Activated CD4-positive, alpha-beta T cell treated with anti-CD3 and anti-CD28 coated beads for 36 hours (primary cell): ENCODE measurements at regions of chr4 and their contacts with region 1.

Region 1: GRCh38 chr4:151117371-151117962 is 18.0 kb downstream of the RPS3A start:
- DNase-seq: peak; percentile 74
- ATAC-seq: peak; percentile 72
- H3K4me3 Mint-ChIP-seq: no peak overlapping the region
- H3K27ac Mint-ChIP-seq: no peak overlapping the region
- H3K4me1 Mint-ChIP-seq: peaks cover 8% of the 10 kb centered on the region
- H3K27me3 Mint-ChIP-seq: no peaks in the 10 kb centered on the region

Region 2: DNA sequence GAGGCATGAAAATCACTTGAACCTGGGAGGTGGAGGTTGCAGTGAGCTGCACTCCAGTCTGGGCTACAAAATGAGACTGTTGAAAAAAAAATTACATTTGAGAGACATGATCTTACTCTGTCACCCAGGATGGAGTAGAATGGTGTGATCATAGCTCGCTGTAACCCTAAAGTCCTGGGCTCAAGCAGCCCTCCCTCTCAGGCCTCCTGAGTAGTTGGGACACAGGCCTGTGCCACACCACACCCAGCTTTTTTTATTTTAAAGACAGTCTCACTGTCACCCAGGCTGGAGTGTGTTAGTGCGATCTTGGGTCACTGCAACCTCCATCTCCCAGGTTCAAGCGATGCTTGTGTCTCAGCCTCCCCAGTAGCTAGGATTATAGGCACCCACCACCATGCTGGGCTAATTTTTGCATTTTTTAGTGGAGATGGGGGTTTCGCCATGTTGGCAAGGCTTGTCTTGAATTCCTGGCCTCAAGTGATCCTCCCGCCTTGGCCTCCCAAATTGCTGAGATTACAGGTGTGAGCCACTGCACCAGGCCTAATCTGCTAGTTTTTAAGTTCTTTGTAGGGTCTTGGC is 11.9 kb before region 1 on chr4:
- CTCF ChIA-PET with region 1: interaction called, 13 read pairs
- POLR2A ChIA-PET with region 1: interaction called, 15 read pairs
- intact Hi-C with region 1: no loop called
- DNase-seq: no peak
- ATAC-seq: no peak
- H3K4me3 Mint-ChIP-seq: no peak overlapping the region
- H3K27ac Mint-ChIP-seq: no peak overlapping the region
- H3K4me1 Mint-ChIP-seq: peaks cover 25% of the 10 kb centered on the region
- H3K27me3 Mint-ChIP-seq: no peaks in the 10 kb centered on the region

Region 3: DNA sequence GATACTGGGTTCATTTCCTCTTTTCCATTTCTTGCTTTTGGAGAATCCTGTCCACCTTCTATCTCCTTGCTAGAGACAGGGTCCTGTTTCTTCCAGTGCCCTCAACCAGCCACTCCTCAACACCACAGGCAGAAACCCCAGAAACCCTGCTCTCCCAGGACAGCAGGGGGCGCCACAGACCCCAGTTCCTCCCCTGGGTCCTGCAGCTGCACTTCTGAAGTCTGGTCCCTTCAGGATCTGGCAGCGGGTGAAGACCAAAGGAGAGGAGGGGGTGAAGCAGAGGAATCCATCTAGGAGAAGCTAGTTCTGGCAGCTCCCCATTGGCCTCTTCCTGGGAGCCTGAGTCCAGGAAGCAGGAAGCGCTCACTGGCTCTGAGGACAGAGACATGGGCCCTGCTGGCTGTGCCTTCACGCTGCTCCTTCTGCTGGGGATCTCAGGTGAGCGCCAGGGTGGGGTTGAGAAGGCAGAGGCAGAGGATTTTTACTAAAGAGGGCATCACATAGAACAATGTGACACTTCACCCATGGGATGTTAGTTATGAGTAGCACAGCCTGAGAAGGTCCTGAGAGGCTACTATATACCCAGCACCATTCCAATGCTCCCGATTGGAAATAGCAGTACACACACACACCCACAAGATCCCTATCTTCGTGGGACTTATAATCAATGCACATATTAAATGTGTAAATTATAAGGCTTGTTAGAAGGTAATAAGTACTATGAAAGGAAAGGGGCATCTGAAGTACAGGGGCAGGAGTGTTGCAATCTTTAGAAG is 159.5 kb after region 1 on chr4 and contains the start of gene PRSS48:
- CTCF ChIA-PET with region 1: interaction called, 4 read pairs
- POLR2A ChIA-PET with region 1: no interaction called
- intact Hi-C with region 1: loop called in 1 of 2 experiments (anchors 5 kb)
- DNase-seq: peak; percentile 79
- ATAC-seq: peak; percentile 55
- H3K4me3 Mint-ChIP-seq: no peak within 1 kb of the TSS
- H3K27ac Mint-ChIP-seq: no peak within 1 kb of the TSS
- H3K4me1 Mint-ChIP-seq: no peaks in the 10 kb centered on the region
- H3K27me3 Mint-ChIP-seq: peaks cover 3% of the 10 kb centered on the region
- total RNA-seq, gene PRSS48: not detected

Region 4: GRCh38 chr4:151325111-151325948 is 207.9 kb after region 1 on chr4 and contains the start of gene SH3D19:
- CTCF ChIA-PET with region 1: no interaction called
- POLR2A ChIA-PET with region 1: no interaction called
- intact Hi-C with region 1: no loop called
- DNase-seq: peak; percentile 7
- ATAC-seq: peak; percentile 53
- H3K4me3 Mint-ChIP-seq: peak within 1 kb of the TSS; percentile 62
- H3K27ac Mint-ChIP-seq: no peak within 1 kb of the TSS
- H3K4me1 Mint-ChIP-seq: peaks cover 8% of the 10 kb centered on the region
- H3K27me3 Mint-ChIP-seq: peaks cover 56% of the 10 kb centered on the region
- total RNA-seq, gene SH3D19: not detected

Region 5: GRCh38 chr4:151604238-151604637 is 486.8 kb after region 1 on chr4:
- CTCF ChIA-PET with region 1: interaction called, 3 read pairs
- POLR2A ChIA-PET with region 1: no interaction called
- intact Hi-C with region 1: loop called in 1 of 2 experiments (anchors 2 kb)
- DNase-seq: no peak
- ATAC-seq: no peak
- H3K4me3 Mint-ChIP-seq: no peak overlapping the region
- H3K27ac Mint-ChIP-seq: no peak overlapping the region
- H3K4me1 Mint-ChIP-seq: no peaks in the 10 kb centered on the region
- H3K27me3 Mint-ChIP-seq: no peaks in the 10 kb centered on the region

Region 6: GRCh38 chr4:151874328-151874727 is 756.9 kb after region 1 on chr4:
- CTCF ChIA-PET with region 1: no interaction called
- POLR2A ChIA-PET with region 1: no interaction called
- intact Hi-C with region 1: no loop called
- DNase-seq: no peak
- ATAC-seq: no peak
- H3K4me3 Mint-ChIP-seq: no peak overlapping the region
- H3K27ac Mint-ChIP-seq: no peak overlapping the region
- H3K4me1 Mint-ChIP-seq: peaks cover 6% of the 10 kb centered on the region
- H3K27me3 Mint-ChIP-seq: no peaks in the 10 kb centered on the region